ENCODE measurements at regions of chr16 and their contacts with region 1.

Region 1: GRCh38 chr16:57734925-57735754 is 430 bp upstream of the KATNB1 start:
- DNase-seq: peak; percentile 98
- ATAC-seq: peak; percentile 95
- H3K4me3 Mint-ChIP-seq: peak overlapping the region; percentile 92
- H3K27ac Mint-ChIP-seq: peak overlapping the region; percentile 96
- H3K4me1 Mint-ChIP-seq: peaks cover 22% of the 10 kb centered on the region
- H3K27me3 Mint-ChIP-seq: no peaks in the 10 kb centered on the region

Region 2: GRCh38 chr16:56425439-56425832 is 1309.7 kb before region 1 on chr16 and contains the start of gene AMFR:
- CTCF ChIA-PET with region 1: no interaction called
- POLR2A ChIA-PET with region 1: no interaction called
- intact Hi-C with region 1: loop called in 1 of 2 experiments (anchors 10 kb)
- DNase-seq: peak; percentile 80
- ATAC-seq: peak; percentile 97
- H3K4me3 Mint-ChIP-seq: peak within 1 kb of the TSS; percentile 90
- H3K27ac Mint-ChIP-seq: peak within 1 kb of the TSS; percentile 82
- H3K4me1 Mint-ChIP-seq: peaks cover 54% of the 10 kb centered on the region
- H3K27me3 Mint-ChIP-seq: no peaks in the 10 kb centered on the region
- total RNA-seq, gene AMFR: 34.0 to 48.0 TPM

Region 3: DNA sequence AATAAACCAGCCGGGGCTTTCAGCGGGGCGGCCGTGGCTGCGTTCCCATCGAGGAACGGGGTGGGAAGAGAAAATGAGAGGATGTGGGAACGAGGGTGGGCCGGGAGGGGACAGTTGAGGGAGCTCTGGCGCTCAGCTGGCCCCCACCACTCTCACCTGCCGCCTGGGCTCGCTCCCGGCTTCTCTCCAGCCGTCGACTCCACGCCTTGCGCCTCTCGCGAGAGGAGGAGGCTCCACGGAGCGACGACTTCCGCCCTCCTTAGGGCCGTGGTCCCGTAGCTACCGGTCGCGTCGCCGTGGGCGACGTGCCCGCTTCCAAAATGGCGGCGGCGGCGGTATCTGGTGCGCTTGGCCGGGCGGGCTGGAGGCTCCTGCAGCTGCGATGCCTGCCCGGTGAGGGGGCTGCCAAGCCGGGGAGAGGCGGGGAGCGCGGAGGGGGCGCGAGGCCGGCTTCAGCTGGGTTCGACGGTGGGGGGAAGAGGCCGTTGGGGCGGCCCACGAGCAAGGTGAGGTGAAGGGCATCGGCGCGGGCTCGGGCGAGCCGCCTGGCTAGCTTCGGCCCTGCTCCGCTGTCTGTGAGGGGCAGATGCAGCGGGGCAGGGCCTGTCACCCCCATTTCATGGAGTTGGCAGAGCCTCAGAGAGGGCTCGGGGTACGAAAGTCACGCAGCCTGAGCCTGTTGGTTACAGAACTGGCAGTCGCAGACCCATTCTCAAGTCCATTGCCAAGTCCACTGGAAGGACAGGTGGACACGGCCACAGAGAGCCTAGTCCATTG is 287.8 kb before region 1 on chr16 and contains the starts of genes CIAPIN1 and COQ9:
- CTCF ChIA-PET with region 1: no interaction called
- POLR2A ChIA-PET with region 1: no interaction called
- intact Hi-C with region 1: loop called (anchors 1 kb)
- DNase-seq: peak; percentile 96
- ATAC-seq: peak; percentile 99
- H3K4me3 Mint-ChIP-seq: peak within 1 kb of the TSS; percentile 91
- H3K27ac Mint-ChIP-seq: peak within 1 kb of the TSS; percentile 85
- H3K4me1 Mint-ChIP-seq: peaks cover 32% of the 10 kb centered on the region
- H3K27me3 Mint-ChIP-seq: no peaks in the 10 kb centered on the region
- total RNA-seq, gene CIAPIN1: 41.7 to 42.6 TPM
- total RNA-seq, gene COQ9: 39.4 to 52.1 TPM

Region 4: DNA sequence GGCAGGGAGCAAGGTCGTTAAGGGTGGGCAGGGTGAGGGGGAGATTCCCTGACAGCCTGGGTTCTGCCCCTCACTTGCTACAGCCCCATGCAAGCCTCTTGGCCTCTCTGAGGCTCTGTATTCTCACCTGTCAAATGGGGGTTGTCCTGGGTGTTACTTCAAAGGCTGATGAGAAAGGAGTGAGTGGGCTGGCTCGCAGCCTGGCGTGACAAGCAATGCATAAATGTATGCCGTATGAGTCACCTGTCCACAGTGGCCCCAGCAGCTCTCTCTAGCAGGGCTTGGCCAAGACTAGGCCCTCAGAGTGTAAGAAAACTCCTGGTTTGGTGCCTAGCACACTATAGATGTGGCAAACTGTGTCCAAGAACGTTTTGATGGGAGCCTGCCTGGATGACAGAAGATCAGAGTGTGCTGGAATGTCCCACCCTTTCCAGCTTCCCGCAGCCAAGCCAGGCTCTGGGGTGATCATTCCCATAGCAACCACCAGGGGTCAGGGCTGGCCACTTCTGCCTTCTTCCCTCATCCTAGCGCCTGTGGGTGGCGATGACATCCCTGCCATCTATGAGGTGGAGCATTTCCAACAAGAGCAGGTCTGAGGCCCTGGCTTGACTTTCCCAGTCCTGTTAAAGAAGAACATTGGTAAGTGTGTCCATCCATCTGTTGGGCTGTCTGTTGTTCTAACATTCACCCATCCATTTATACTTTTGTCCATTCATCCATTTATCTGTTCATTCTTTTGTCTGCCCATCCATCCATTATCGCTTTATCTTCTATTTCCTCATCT is 143.9 kb before region 1 on chr16:
- CTCF ChIA-PET with region 1: interaction called, 5 read pairs
- POLR2A ChIA-PET with region 1: no interaction called
- intact Hi-C with region 1: loop called (anchors 1 to 5 kb)
- DNase-seq: peak; percentile 87
- ATAC-seq: peak; percentile 90
- H3K4me3 Mint-ChIP-seq: peak overlapping the region; percentile 60
- H3K27ac Mint-ChIP-seq: peak overlapping the region; percentile 92
- H3K4me1 Mint-ChIP-seq: peaks cover 32% of the 10 kb centered on the region
- H3K27me3 Mint-ChIP-seq: no peaks in the 10 kb centered on the region

Region 5: DNA sequence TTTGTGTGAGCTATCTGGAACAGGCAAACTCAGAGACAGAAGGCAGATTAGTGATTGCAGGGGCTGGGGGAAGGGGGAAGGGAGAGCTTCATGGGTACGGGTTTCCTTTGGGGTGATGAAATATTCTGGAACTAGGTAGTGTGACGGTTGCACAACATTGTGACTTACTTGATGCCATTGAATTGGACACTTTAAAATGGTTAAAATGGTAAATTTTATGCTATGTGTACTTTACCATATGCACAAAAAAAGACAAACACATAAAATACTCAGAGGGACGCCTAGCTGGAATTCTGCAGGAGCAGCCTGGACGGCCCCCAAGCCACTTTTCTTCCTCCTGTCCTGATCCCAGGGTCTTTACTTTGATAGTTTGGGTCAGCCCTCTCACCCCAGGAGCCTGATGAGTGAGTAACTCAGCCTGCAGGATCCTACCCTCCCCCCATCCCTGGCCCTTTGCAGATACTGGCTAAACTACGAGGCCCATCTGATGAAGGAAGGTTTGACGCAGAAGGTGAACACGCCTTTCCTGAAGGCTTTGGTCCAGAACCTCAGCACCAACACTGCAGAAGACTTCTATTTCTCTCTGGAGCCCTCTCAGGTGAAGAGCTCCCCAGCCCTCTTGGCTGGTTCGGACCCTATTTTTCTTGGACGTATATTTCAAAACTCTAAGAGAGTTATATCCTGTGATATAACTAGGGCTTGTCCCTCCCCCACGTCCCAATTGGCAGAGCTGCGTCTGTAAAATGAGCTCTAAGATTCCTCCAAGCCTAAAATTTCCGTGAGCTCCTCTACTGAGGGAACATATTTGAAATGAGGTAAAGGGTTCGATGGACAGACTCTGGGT is 59.2 kb before region 1 on chr16:
- CTCF ChIA-PET with region 1: no interaction called
- POLR2A ChIA-PET with region 1: no interaction called
- intact Hi-C with region 1: no loop called
- DNase-seq: no peak
- ATAC-seq: no peak
- H3K4me3 Mint-ChIP-seq: no peak overlapping the region
- H3K27ac Mint-ChIP-seq: no peak overlapping the region
- H3K4me1 Mint-ChIP-seq: no peaks in the 10 kb centered on the region
- H3K27me3 Mint-ChIP-seq: no peaks in the 10 kb centered on the region

Region 6: GRCh38 chr16:57802341-57803133 is 67.4 kb after region 1 on chr16 and contains the start of gene KIFC3:
- CTCF ChIA-PET with region 1: no interaction called
- POLR2A ChIA-PET with region 1: no interaction called
- intact Hi-C with region 1: loop called in 1 of 2 experiments (anchors 1 kb)
- DNase-seq: peak; percentile 86
- ATAC-seq: peak; percentile 83
- H3K4me3 Mint-ChIP-seq: peak within 1 kb of the TSS; percentile 63
- H3K27ac Mint-ChIP-seq: peak within 1 kb of the TSS; percentile 23
- H3K4me1 Mint-ChIP-seq: peaks cover 18% of the 10 kb centered on the region
- H3K27me3 Mint-ChIP-seq: peaks cover 27% of the 10 kb centered on the region
- total RNA-seq, gene KIFC3: 0.32 to 0.66 TPM

Region 7: GRCh38 chr16:58198022-58198683 is 463.0 kb after region 1 on chr16 and contains the start of gene CSNK2A2:
- CTCF ChIA-PET with region 1: no interaction called
- POLR2A ChIA-PET with region 1: no interaction called
- intact Hi-C with region 1: loop called in 1 of 2 experiments (anchors 1 kb)
- DNase-seq: peak; percentile 84
- ATAC-seq: peak; percentile 94
- H3K4me3 Mint-ChIP-seq: peak within 1 kb of the TSS; percentile 84
- H3K27ac Mint-ChIP-seq: peak within 1 kb of the TSS; percentile 74
- H3K4me1 Mint-ChIP-seq: peaks cover 34% of the 10 kb centered on the region
- H3K27me3 Mint-ChIP-seq: peaks cover 6% of the 10 kb centered on the region
- total RNA-seq, gene CSNK2A2: 85.9 to 92.2 TPM

Region 8: DNA sequence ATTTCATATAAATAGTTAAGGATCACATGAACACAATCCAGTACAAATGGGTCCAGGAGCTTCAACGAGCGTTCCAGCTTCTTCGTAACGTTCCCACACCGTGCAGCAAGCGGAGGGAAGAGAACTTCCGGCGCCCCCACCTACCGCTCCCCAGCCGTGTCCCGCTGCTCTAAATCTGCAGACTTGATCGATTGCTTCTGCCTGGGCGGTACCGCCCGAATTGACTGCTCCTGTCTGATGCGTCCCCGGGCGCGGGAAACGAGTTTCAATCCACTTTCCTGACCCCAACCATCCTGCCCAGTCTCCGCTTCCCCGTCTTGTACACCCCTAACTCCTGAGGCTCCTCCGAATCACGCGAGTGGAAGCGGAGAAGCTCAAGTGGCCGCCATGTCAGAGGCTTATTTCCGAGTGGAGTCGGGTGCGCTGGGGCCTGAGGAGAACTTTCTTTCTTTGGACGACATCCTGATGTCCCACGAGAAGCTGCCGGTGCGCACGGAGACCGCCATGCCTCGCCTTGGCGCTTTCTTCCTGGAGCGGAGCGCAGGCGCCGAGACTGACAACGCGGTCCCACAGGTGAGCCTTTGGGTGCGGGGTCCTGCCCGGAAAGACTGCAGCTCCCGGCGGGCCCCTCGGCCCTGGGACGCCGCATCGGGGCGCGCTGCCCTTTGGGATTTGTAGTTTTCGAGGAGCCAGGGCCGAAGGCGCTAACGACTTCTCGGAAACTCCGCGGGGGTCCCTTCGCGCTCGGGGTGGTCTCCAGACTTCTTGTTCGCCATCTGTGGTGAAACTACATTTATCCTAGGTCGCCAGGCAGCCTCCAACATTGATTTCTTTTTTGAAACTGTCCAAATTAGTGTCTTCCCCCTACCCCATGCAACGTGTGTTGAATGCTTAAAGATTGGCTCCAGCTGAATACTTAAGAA is 657.3 kb after region 1 on chr16 and contains the start of gene GINS3:
- CTCF ChIA-PET with region 1: interaction called, 3 read pairs
- POLR2A ChIA-PET with region 1: no interaction called
- intact Hi-C with region 1: loop called in 1 of 2 experiments (anchors 1 kb)
- DNase-seq: peak; percentile 93
- ATAC-seq: peak; percentile 96
- H3K4me3 Mint-ChIP-seq: peak within 1 kb of the TSS; percentile 100
- H3K27ac Mint-ChIP-seq: peak within 1 kb of the TSS; percentile 100
- H3K4me1 Mint-ChIP-seq: peaks cover 12% of the 10 kb centered on the region
- H3K27me3 Mint-ChIP-seq: no peaks in the 10 kb centered on the region
- total RNA-seq, gene GINS3: 20.2 to 23.0 TPM

Measured in activated CD4-positive, alpha-beta T cell treated with anti-CD3 and anti-CD28 coated beads for 36 hours (primary cell).